Natural killer cell (primary cell): ENCODE measurements at regions of chr3 and their contacts with region 1.

Region 1: GRCh38 chr3:130892759-130893375 is 1.0 kb upstream of the ATP2C1 start:
- DNase-seq: peak in 1 of 2 donors; percentile 88
- ATAC-seq: peak; percentile 57 to 76 (median 58)
- H3K4me3 ChIP-seq: peak overlapping the region; percentile 94
- H3K4me3 Mint-ChIP-seq: peak overlapping the region; percentile 93
- H3K27ac ChIP-seq: peak overlapping the region; percentile 98
- H3K27ac Mint-ChIP-seq: peak overlapping the region; percentile 97 to 98
- H3K4me1 ChIP-seq: peaks cover 8% of the 10 kb centered on the region
- H3K4me1 Mint-ChIP-seq: peaks cover 31 to 37% of the 10 kb centered on the region in 2 donors
- H3K27me3 ChIP-seq: no peaks in the 10 kb centered on the region
- H3K27me3 Mint-ChIP-seq: no peaks in the 10 kb centered on the region
- CTCF ChIP-seq: peak; percentile 86

Region 2: GRCh38 chr3:130746246-130747039 is 146.4 kb before region 1 on chr3 and contains the start of gene PIK3R4:
- intact Hi-C with region 1: loop called (anchors 1 kb)
- DNase-seq: peak; percentile 86 to 99
- ATAC-seq: peak; percentile 71 to 83 (median 80)
- H3K4me3 ChIP-seq: peak within 1 kb of the TSS; percentile 68
- H3K4me3 Mint-ChIP-seq: no peak within 1 kb of the TSS
- H3K27ac ChIP-seq: peak within 1 kb of the TSS; percentile 90
- H3K27ac Mint-ChIP-seq: no peak within 1 kb of the TSS
- H3K4me1 ChIP-seq: peaks cover 13% of the 10 kb centered on the region
- H3K4me1 Mint-ChIP-seq: peaks cover 45 to 52% of the 10 kb centered on the region in 2 donors
- H3K27me3 ChIP-seq: no peaks in the 10 kb centered on the region
- H3K27me3 Mint-ChIP-seq: no peaks in the 10 kb centered on the region
- CTCF ChIP-seq: no peak
- total RNA-seq, gene PIK3R4: 14.3 to 20.8 (median 17.0) TPM

Region 3: GRCh38 chr3:130759699-130760338 is 133.0 kb before region 1 on chr3:
- intact Hi-C with region 1: loop called (anchors 1 kb)
- DNase-seq: peak in 1 of 2 donors; percentile 76
- ATAC-seq: peak; percentile 81 to 86 (median 83)
- H3K4me3 ChIP-seq: no peak overlapping the region
- H3K4me3 Mint-ChIP-seq: no peak overlapping the region
- H3K27ac ChIP-seq: no peak overlapping the region
- H3K27ac Mint-ChIP-seq: no peak overlapping the region
- H3K4me1 ChIP-seq: no peaks in the 10 kb centered on the region
- H3K4me1 Mint-ChIP-seq: peaks cover 0 to 5% of the 10 kb centered on the region in 2 donors
- H3K27me3 ChIP-seq: no peaks in the 10 kb centered on the region
- H3K27me3 Mint-ChIP-seq: peaks cover 9 to 18% of the 10 kb centered on the region in 2 donors
- CTCF ChIP-seq: peak; percentile 83

Region 4: GRCh38 chr3:131026321-131027178 is 133.7 kb after region 1 on chr3 and contains the starts of genes ASTE1 and NEK11:
- intact Hi-C with region 1: loop called (anchors 5 kb)
- DNase-seq: peak; percentile 89 to 95
- ATAC-seq: peak; percentile 96 to 99 (median 96)
- H3K4me3 ChIP-seq: peak within 1 kb of the TSS; percentile 97
- H3K4me3 Mint-ChIP-seq: peak within 1 kb of the TSS; percentile 97
- H3K27ac ChIP-seq: peak within 1 kb of the TSS; percentile 98
- H3K27ac Mint-ChIP-seq: peak within 1 kb of the TSS; percentile 97 to 98
- H3K4me1 ChIP-seq: peaks cover 20% of the 10 kb centered on the region
- H3K4me1 Mint-ChIP-seq: peaks cover 44 to 51% of the 10 kb centered on the region in 2 donors
- H3K27me3 ChIP-seq: no peaks in the 10 kb centered on the region
- H3K27me3 Mint-ChIP-seq: no peaks in the 10 kb centered on the region
- CTCF ChIP-seq: no peak
- total RNA-seq, gene ASTE1: 22.8 to 28.8 (median 24.3) TPM
- total RNA-seq, gene NEK11: 2.6 to 3.6 (median 3.5) TPM

Region 5: DNA sequence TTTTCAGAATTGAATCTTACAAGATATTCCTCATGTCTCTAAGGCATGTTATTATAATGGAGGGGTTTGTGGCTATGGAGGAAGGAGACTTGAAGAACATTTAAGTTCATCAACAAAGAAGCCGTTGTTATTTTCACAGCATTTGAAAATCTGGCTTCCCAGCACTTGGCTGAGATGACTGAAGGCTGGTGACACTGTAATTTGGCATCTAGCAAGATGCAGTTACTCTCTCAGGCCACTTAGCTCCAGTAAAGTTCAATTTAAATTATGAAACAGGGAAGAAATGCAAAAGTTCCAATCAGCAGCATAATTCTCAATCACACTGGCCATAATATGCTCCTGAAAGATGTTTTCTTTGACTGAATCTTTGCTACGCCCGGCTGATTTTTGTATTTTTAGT is 349.3 kb after region 1 on chr3:
- intact Hi-C with region 1: no loop called
- DNase-seq: no peak
- ATAC-seq: no peak
- H3K4me3 ChIP-seq: no peak overlapping the region
- H3K4me3 Mint-ChIP-seq: no peak overlapping the region
- H3K27ac ChIP-seq: no peak overlapping the region
- H3K27ac Mint-ChIP-seq: no peak overlapping the region
- H3K4me1 ChIP-seq: no peaks in the 10 kb centered on the region
- H3K4me1 Mint-ChIP-seq: no peaks in the 10 kb centered on the region
- H3K27me3 ChIP-seq: no peaks in the 10 kb centered on the region
- H3K27me3 Mint-ChIP-seq: peaks cover 9 to 10% of the 10 kb centered on the region in 2 donors
- CTCF ChIP-seq: no peak

Region 6: GRCh38 chr3:131381444-131382291 is 488.8 kb after region 1 on chr3 and contains the start of gene NUDT16:
- intact Hi-C with region 1: loop called (anchors 2 kb)
- DNase-seq: peak; percentile 94 to 96
- ATAC-seq: peak; percentile 97 to 100 (median 97)
- H3K4me3 ChIP-seq: peak within 1 kb of the TSS; percentile 67
- H3K4me3 Mint-ChIP-seq: peak within 1 kb of the TSS; percentile 95
- H3K27ac ChIP-seq: peak within 1 kb of the TSS; percentile 51
- H3K27ac Mint-ChIP-seq: peak within 1 kb of the TSS; percentile 88 to 97
- H3K4me1 ChIP-seq: peaks cover 25% of the 10 kb centered on the region
- H3K4me1 Mint-ChIP-seq: peaks cover 30 to 40% of the 10 kb centered on the region in 2 donors
- H3K27me3 ChIP-seq: no peaks in the 10 kb centered on the region
- H3K27me3 Mint-ChIP-seq: no peaks in the 10 kb centered on the region
- CTCF ChIP-seq: no peak
- total RNA-seq, gene NUDT16: 9.0 to 10.7 (median 9.7) TPM

Region 7: DNA sequence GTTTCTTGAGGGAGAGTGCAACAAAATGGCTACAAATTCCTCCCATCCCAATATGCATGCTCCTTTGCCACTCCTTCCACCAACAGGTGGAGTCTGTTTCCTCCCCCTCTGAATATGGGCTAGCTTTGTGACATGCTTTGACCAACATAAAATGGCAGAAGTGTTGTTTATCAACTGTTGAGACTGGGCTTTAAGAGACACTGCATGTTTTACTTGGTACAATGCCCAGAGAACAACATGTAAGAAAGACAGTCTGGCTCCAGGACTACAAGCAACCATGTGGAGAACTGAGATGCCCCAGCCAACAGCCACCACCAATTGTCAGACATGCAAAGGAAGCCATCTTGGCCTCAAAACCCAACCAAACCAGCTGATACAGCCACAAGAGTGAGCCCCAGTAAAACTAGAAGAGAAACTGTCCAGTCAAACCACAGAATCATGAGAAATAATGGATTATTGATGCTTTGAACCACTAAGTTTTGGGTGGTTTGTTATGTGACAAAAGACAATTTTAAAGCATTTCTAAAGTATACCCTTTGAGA is 529.2 kb after region 1 on chr3:
- intact Hi-C with region 1: no loop called
- DNase-seq: no peak
- ATAC-seq: no peak
- H3K4me3 ChIP-seq: no peak overlapping the region
- H3K4me3 Mint-ChIP-seq: no peak overlapping the region
- H3K27ac ChIP-seq: no peak overlapping the region
- H3K27ac Mint-ChIP-seq: no peak overlapping the region
- H3K4me1 ChIP-seq: no peaks in the 10 kb centered on the region
- H3K4me1 Mint-ChIP-seq: no peaks in the 10 kb centered on the region
- H3K27me3 ChIP-seq: no peaks in the 10 kb centered on the region
- H3K27me3 Mint-ChIP-seq: peaks cover 5 to 10% of the 10 kb centered on the region in 2 donors
- CTCF ChIP-seq: no peak

Region 8: DNA sequence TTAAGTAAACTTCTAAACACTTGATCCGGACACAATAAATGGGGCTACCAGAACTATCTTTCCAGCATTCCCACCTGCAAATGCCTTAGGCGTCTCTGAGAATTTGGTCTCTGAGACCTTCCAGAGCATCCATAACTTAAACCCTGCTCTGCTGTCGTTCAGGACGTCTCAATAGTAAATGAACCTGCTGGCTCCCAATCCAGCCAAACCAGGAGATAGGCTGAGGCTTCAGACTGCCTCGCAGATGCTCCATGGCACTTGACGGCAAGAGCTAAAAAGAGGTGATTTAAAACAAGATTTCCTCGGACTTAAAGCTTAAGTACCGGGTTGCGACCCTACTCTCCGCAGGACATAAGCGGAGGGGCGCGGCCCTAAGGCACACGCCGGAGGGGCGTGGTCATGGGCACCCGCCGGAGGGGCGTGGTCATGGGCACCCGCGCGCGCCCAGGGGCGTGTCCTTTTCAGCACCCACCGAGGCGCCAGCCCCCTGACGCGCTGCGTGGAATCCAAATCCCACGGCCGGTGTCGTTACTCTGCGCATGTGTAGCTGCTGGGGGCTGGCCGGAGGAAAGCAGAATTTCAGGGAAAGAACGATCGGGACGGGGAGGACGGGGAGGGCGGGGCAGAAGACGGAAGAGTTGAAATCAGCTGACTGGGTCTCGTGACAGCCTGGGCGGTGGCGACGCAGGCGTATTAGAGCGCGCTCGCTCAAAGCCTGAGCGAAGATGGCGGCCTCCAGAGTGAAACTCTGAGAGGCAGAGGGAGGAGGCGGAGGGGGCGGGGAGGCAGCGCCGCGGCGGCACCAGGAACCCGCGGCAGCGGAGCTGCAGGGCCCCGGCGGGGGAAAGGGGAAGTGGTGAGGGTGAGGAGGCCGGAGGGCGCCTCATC is 1524.2 kb after region 1 on chr3 and contains the start of gene DNAJC13:
- intact Hi-C with region 1: loop called (anchors 10 kb)
- DNase-seq: peak; percentile 85 to 97
- ATAC-seq: peak; percentile 92 to 97 (median 94)
- H3K4me3 ChIP-seq: peak within 1 kb of the TSS; percentile 98
- H3K4me3 Mint-ChIP-seq: peak within 1 kb of the TSS; percentile 99
- H3K27ac ChIP-seq: peak within 1 kb of the TSS; percentile 82
- H3K27ac Mint-ChIP-seq: peak within 1 kb of the TSS; percentile 84 to 95
- H3K4me1 ChIP-seq: peaks cover 10% of the 10 kb centered on the region
- H3K4me1 Mint-ChIP-seq: peaks cover 15 to 22% of the 10 kb centered on the region in 2 donors
- H3K27me3 ChIP-seq: no peaks in the 10 kb centered on the region
- H3K27me3 Mint-ChIP-seq: peaks cover 1 to 4% of the 10 kb centered on the region in 2 donors
- CTCF ChIP-seq: no peak
- total RNA-seq, gene DNAJC13: 30.5 to 44.0 (median 42.9) TPM